Heart left ventricle (tissue), 16 donors: ENCODE measurements at regions of chr2 and their contacts with region 1.

Region 1: DNA sequence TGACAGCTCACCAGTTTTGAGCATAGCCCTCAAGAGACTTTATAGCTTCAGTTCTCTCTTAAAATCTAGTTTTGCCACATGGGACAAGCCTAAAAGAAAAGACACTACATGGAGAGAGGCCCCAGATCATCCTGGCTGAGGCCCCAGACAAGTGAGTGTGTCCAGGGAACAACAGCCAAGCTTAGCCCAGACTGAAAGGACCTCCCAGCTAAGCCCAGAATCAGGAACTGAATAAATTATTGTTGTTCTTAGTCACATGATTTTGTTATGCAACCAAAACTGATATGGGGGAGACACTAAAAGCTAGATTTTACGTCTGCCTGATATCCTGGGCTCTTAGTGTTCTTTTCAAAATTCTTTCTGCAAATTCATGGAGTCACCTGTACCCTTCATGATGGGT is 29.3 kb upstream of the LBH start:
- DNase-seq: peak in 3 of 5 donors; percentile 54 to 60 (median 60)
- ATAC-seq: peak; percentile 76 to 89 (median 86)
- H3K4me3 ChIP-seq: no peak overlapping the region
- H3K27ac ChIP-seq: peak overlapping the region in 10 of 12 donors; percentile 18 to 66 (median 32)
- H3K4me1 ChIP-seq: peaks cover 0 to 33% (median 8%) of the 10 kb centered on the region in 12 donors
- H3K27me3 ChIP-seq: no peaks in the 10 kb centered on the region
- CTCF ChIP-seq: no peak
- POLR2A ChIP-seq: no peak

Region 2: DNA sequence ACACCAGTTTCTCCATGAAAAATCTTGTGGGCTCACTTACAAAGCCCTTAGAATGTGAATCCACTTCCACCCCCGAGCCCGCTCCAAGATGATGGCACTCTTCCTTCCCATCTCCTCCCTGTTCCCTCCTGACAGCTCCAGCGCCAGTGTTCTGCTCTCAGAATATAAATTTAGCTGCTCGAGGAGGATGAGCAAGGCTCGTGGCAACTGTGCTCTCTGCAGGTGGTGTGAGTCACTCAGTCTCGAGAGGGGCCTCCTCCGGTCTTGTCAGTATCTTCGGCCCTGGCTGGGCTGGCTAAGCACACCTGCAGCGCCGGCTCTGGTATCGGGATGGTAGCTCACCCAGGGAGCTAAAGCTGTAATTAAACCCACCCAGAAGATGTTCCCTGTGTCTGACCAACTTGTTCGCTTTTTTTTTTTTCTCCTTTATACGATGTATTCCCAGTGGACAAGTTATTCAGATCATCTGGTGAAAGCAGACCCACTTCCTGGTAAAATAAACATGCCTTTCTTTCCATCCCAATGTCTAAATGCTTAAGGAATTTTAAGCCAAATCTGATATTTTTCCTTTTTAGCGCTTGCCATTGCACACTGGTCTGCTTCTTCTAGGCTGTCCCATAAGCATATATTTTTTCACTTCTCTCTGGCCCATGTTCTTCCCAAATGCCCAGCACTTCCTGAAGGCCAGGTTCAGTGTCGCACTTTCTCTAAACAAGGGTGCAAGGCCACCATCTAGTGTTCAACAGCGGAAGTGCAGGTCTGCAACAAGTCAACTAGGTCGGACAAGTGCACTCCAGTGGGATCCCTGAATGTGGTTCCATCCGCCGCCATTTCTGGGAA is 86.6 kb before region 1 on chr2:
- intact Hi-C with region 1: no loop called
- DNase-seq: peak; percentile 68 to 86 (median 74)
- ATAC-seq: peak; percentile 60 to 87 (median 86)
- H3K4me3 ChIP-seq: no peak overlapping the region
- H3K27ac ChIP-seq: no peak overlapping the region
- H3K4me1 ChIP-seq: peaks cover 0 to 10% (median 0%) of the 10 kb centered on the region in 12 donors
- H3K27me3 ChIP-seq: no peaks in the 10 kb centered on the region
- CTCF ChIP-seq: peak; percentile 84 to 93 (median 88)
- POLR2A ChIP-seq: no peak

Region 3: DNA sequence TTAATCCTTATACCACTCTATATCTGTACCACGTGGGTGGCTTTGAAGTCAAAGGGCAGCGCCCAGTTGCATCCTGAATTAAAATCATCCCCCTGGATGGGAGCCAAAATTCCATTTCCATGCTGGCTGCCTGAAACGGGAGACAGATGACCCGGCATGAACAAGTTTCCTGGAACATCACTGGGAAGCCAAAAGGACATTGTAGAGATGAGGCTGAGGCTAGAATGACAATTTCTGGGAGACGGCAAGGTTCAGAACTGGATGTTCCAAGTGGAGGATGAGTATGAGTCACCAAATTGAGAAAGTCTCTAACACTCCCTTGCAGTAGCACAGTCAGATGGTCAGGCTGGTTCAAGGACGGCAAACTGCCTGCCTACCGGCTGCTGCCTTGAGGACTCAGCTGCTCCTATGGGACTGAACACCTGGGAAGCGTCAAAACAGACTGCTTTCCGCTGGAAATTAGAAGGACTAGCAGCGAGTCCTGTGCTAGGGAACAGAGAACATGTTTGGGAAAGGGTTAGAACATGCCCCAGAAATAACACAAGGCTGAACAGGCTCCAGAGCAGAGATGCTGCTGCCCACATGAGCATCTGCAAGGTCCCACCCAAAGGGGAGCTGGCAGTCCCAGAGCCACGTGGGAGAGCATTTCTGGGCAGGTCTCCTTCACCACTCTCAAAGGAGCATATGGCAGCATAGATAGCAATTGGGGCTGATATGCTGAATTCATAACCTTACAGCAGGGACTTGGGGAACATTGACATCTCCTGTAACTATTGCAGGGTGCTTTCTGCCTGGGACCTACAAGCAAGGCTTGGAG is 23.2 kb before region 1 on chr2:
- intact Hi-C with region 1: loop called in 2 of 10 experiments (anchors 2 to 5 kb)
- DNase-seq: peak in 3 of 5 donors; percentile 32 to 80 (median 56)
- ATAC-seq: peak; percentile 59 to 89 (median 76)
- H3K4me3 ChIP-seq: no peak overlapping the region
- H3K27ac ChIP-seq: peak overlapping the region in 9 of 12 donors; percentile 19 to 82 (median 56)
- H3K4me1 ChIP-seq: peaks cover 0 to 31% (median 15%) of the 10 kb centered on the region in 12 donors
- H3K27me3 ChIP-seq: no peaks in the 10 kb centered on the region
- CTCF ChIP-seq: no peak
- POLR2A ChIP-seq: no peak

Region 4: DNA sequence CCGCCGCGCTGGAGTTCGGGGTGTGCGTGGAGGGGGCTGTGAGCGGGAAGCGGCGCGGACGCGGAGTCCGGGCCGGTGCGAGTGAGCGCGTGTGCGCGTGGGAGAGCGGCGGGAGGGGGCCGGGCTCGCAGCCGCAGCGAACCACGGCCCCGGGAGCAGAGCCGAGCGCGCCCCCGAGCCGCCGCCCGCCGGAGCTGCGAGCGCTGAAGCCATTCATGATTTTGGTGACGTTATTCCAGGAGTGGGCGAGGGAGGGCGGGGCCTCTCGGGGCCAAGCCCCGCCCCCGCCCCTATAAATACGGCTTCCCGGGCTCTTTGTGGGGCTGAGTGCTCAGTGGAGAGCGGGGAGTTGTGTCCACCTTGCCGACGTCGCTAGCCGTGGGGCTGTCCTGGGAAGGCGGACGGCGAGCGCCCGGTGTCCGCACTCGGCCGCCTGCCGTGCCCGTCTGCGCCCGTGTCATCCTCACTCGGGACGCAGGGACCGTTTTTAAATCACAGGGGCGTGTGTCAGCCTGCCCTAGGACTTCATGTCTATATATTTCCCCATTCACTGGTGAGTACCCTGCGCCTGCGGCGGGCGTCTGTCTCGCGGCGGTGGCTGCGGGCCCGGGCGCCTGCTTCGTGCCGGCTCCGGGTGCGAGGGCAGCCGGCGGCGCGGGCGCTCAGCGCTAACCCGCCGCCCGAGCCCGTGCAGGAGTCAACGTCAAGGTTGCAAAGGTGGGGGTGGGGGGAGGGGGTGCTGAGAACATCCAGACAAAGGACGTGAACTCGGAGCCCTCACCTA is 29.4 kb after region 1 on chr2 and contains the start of gene LBH:
- intact Hi-C with region 1: no loop called
- DNase-seq: peak; percentile 91 to 93 (median 91)
- ATAC-seq: peak; percentile 83 to 87 (median 86)
- H3K4me3 ChIP-seq: peak within 1 kb of the TSS; percentile 72 to 98 (median 90)
- H3K27ac ChIP-seq: peak within 1 kb of the TSS; percentile 89 to 100 (median 96)
- H3K4me1 ChIP-seq: peaks cover 0 to 57% (median 41%) of the 10 kb centered on the region in 12 donors
- H3K27me3 ChIP-seq: peaks cover 0 to 9% (median 0%) of the 10 kb centered on the region in 9 donors
- CTCF ChIP-seq: peak in 1 of 12 donors; percentile 13
- POLR2A ChIP-seq: peak; percentile 92 to 100
- total RNA-seq, gene LBH: 125 to 226 (median 169) TPM